ENCODE measurements at regions of chr20 and their contacts with region 1.

Region 1: GRCh38 chr20:62136283-62137091 is 6.7 kb downstream of the PSMA7 start:
- DNase-seq: no peak
- H3K4me3 ChIP-seq: no peak overlapping the region
- H3K27me3 ChIP-seq: no peaks in the 10 kb centered on the region
- CTCF ChIP-seq: peak; percentile 90

Region 2: DNA sequence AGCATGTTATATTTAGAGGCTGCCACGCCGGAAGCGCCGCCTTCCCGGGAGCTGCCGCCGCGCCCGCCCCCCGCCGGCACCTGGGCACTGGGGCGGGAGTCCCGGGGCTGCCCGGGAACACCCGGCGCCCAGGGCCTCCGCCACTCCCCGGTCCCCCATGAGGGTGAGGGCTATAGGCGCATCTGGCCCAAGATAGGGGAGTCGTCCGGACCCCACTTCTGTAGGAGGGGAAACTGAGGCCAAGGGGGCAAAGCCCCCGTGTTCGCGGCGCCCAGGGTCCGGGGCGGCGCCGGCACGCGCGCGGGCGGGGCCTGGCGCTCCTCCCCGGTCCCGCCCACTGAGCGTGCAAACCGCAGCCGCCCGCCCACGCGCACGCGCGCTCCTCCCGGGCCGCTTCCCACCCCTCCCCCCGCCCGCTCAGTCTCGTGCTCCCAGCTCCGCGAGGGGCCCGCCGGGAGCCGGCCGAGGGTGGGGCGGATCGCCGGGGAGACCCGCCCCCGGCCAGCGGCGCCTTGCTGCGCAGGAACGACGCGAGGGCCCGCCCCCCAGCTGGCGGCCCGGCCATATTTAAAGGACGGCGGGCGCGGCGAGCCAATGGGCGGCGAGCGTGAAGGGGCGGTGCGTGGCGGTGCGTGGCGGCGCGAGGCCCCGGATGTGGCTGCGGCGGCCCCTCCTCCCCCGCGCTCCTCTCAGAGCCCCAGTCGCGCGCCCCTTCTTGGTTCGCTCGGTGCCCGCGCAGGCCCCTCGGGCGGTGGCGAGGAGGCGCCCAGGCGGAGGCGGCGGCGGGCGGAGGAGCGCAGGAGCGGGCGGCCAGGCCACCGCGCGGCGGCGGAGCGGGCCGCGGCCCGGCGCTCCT is 14.5 kb before region 1 on chr20 and contains the start of gene LSM14B:
- CTCF ChIA-PET with region 1: interaction called, 10 read pairs
- POLR2A ChIA-PET with region 1: no interaction called
- DNase-seq: peak; percentile 82
- H3K4me3 ChIP-seq: peak within 1 kb of the TSS; percentile 73
- H3K27me3 ChIP-seq: peaks cover 11% of the 10 kb centered on the region
- CTCF ChIP-seq: no peak
- polyA plus RNA-seq, gene LSM14B: 23.5 and 48.2 TPM in 2 replicates

Measured in BJ (cell line).